Activated CD8-positive, alpha-beta T cell treated with anti-CD3 and anti-CD28 coated beads, Interleukin-2, amount 10 ng/mL, durations not matched to agents 7 days and 5 days (primary cell): ENCODE measurements at regions of chr20 and their contacts with region 1.

Region 1: GRCh38 chr20:40990542-40991120 is 38.0 kb upstream of the TOP1 start:
- DNase-seq: peak; percentile 85
- ATAC-seq: peak; percentile 90
- H3K4me3 Mint-ChIP-seq: peak overlapping the region; percentile 15
- H3K27ac Mint-ChIP-seq: peak overlapping the region; percentile 85
- H3K4me1 Mint-ChIP-seq: peaks cover 55% of the 10 kb centered on the region
- H3K27me3 Mint-ChIP-seq: no peaks in the 10 kb centered on the region

Region 2: GRCh38 chr20:40970201-40970600 is 20.4 kb before region 1 on chr20:
- CTCF ChIA-PET with region 1: interaction called, 64 read pairs
- POLR2A ChIA-PET with region 1: interaction called, 3 read pairs
- DNase-seq: no peak
- ATAC-seq: no peak
- H3K4me3 Mint-ChIP-seq: no peak overlapping the region
- H3K27ac Mint-ChIP-seq: no peak overlapping the region
- H3K4me1 Mint-ChIP-seq: peaks cover 22% of the 10 kb centered on the region
- H3K27me3 Mint-ChIP-seq: peaks cover 39% of the 10 kb centered on the region

Region 3: DNA sequence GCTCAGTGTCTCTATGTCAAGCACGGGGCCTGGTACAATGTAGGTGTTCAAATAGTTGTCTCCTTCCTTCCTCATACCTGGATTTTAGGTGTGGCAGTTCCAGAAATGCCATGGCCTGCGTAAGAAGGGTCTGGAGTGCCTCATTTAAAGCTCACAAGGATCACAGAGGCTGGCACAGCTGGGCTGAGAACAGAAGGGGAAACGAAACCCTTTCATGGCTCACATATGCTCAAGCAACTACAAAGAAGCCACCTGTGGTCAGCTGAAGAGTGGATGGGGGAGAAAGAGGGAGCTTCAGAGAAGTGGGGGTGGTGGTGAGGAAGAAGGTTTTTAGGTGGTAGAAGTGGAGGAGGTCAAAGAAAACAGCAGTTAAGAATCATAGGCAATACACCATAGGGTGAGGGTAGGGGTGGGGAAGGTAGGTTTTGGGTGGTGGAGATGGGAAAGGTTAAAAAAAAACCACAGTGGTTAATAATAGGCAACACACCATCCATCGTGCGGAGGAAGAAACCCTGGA is 21.0 kb after region 1 on chr20:
- CTCF ChIA-PET with region 1: interaction called, 47 read pairs
- POLR2A ChIA-PET with region 1: interaction called, 10 read pairs
- DNase-seq: peak; percentile 77
- ATAC-seq: peak; percentile 88
- H3K4me3 Mint-ChIP-seq: peak overlapping the region; percentile 50
- H3K27ac Mint-ChIP-seq: peak overlapping the region; percentile 92
- H3K4me1 Mint-ChIP-seq: peaks cover 54% of the 10 kb centered on the region
- H3K27me3 Mint-ChIP-seq: no peaks in the 10 kb centered on the region

Region 4: GRCh38 chr20:41028348-41029148 is 37.9 kb after region 1 on chr20 and contains the start of gene TOP1:
- CTCF ChIA-PET with region 1: interaction called, 61 read pairs
- POLR2A ChIA-PET with region 1: interaction called, 8 read pairs
- DNase-seq: peak; percentile 100
- ATAC-seq: peak; percentile 97
- H3K4me3 Mint-ChIP-seq: peak within 1 kb of the TSS; percentile 92
- H3K27ac Mint-ChIP-seq: peak within 1 kb of the TSS; percentile 94
- H3K4me1 Mint-ChIP-seq: peaks cover 54% of the 10 kb centered on the region
- H3K27me3 Mint-ChIP-seq: peaks cover 3% of the 10 kb centered on the region
- total RNA-seq, gene TOP1: 89.1 to 91.5 TPM

Region 5: DNA sequence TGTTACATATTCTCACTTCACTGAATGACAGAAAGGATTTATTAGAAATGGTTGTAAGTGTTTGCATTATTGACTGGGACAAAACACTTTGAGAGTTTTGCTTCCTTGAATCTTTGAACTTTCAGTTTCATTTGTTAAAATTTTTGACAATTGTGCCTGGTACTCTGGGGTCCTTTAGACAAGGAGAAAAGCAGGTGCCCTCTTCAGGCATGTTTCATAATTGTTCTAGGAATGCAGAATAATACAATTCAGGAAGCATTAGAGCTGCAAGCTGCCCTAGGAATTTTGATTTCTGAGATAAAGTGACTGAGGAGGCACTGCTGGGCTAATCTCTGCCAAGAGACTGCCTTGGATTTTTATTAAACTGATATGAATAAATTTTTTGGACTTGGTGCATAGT is 87.7 kb after region 1 on chr20:
- CTCF ChIA-PET with region 1: interaction called, 217 read pairs
- POLR2A ChIA-PET with region 1: interaction called, 7 read pairs
- DNase-seq: peak; percentile 26
- ATAC-seq: peak; percentile 36
- H3K4me3 Mint-ChIP-seq: peak overlapping the region; percentile 36
- H3K27ac Mint-ChIP-seq: peak overlapping the region; percentile 27
- H3K4me1 Mint-ChIP-seq: peaks cover 77% of the 10 kb centered on the region
- H3K27me3 Mint-ChIP-seq: no peaks in the 10 kb centered on the region

Region 6: GRCh38 chr20:41136680-41137613 is 146.3 kb after region 1 on chr20 and contains the start of gene PLCG1:
- CTCF ChIA-PET with region 1: interaction called, 22 read pairs
- POLR2A ChIA-PET with region 1: interaction called, 3 read pairs
- DNase-seq: peak; percentile 88
- ATAC-seq: peak; percentile 66
- H3K4me3 Mint-ChIP-seq: peak within 1 kb of the TSS; percentile 91
- H3K27ac Mint-ChIP-seq: peak within 1 kb of the TSS; percentile 94
- H3K4me1 Mint-ChIP-seq: peaks cover 54% of the 10 kb centered on the region
- H3K27me3 Mint-ChIP-seq: no peaks in the 10 kb centered on the region
- total RNA-seq, gene PLCG1: 395 to 406 TPM